IMR-90 (cell line): ENCODE measurements at regions of chr6 and their contacts with region 1.

Region 1: GRCh38 chr6:17640477-17640917 is 40.4 kb downstream of the FAM8A1 start:
- DNase-seq: peak; percentile 35
- ATAC-seq: no peak
- H3K4me3 ChIP-seq: no peak overlapping the region
- H3K27ac ChIP-seq: no peak overlapping the region
- H3K4me1 ChIP-seq: 0 out of 2 replicates have a peak, but pooled peaks cover 2% of the 10 kb centered on the region
- H3K27me3 ChIP-seq: no peaks in the 10 kb centered on the region
- CTCF ChIP-seq: no peak
- POLR2A ChIP-seq: no peak
- RAD21 ChIP-seq: no peak

Region 2: GRCh38 chr6:17679726-17680125 is 39.2 kb after region 1 on chr6:
- CTCF ChIA-PET with region 1: no interaction called
- POLR2A ChIA-PET with region 1: no interaction called
- dilution Hi-C with region 1: no loop called
- in situ Hi-C with region 1: no loop called
- intact Hi-C with region 1: loop called (anchors 5 kb)
- DNase-seq: no peak
- ATAC-seq: no peak
- H3K4me3 ChIP-seq: no peak overlapping the region
- H3K27ac ChIP-seq: no peak overlapping the region
- H3K4me1 ChIP-seq: peaks cover 1% of the 10 kb centered on the region; the same call in 1 of the 2 replicates
- H3K27me3 ChIP-seq: no peaks in the 10 kb centered on the region
- CTCF ChIP-seq: no peak
- POLR2A ChIP-seq: no peak
- RAD21 ChIP-seq: no peak